Gastrocnemius medialis (tissue), 4 donors: ENCODE measurements at regions of chr2 and their contacts with region 1.

Region 1: GRCh38 chr2:26942543-26943295 is 27.7 kb upstream of the MAPRE3 start:
- DNase-seq: peak; percentile 20 to 47
- ATAC-seq: peak; percentile 41 to 68
- H3K4me3 ChIP-seq: no peak overlapping the region
- H3K27ac ChIP-seq: no peak overlapping the region
- H3K4me1 ChIP-seq: peaks cover 6 to 8% of the 10 kb centered on the region in 2 donors
- H3K27me3 ChIP-seq: peaks cover 0 to 4% (median 0%) of the 10 kb centered on the region in 3 donors
- CTCF ChIP-seq: peak; percentile 47 to 86 (median 78)
- POLR2A ChIP-seq: no peak

Region 2: GRCh38 chr2:26840937-26841613 is 101.6 kb before region 1 on chr2:
- in situ Hi-C with region 1: loop called in 3 of 4 experiments (anchors 5 to 25 kb)
- intact Hi-C with region 1: loop called (anchors 1 kb)
- DNase-seq: no peak
- ATAC-seq: no peak
- H3K4me3 ChIP-seq: no peak overlapping the region
- H3K27ac ChIP-seq: no peak overlapping the region
- H3K4me1 ChIP-seq: no peaks in the 10 kb centered on the region
- H3K27me3 ChIP-seq: peaks cover 13 to 39% (median 29%) of the 10 kb centered on the region in 3 donors
- CTCF ChIP-seq: no peak
- POLR2A ChIP-seq: no peak

Region 3: DNA sequence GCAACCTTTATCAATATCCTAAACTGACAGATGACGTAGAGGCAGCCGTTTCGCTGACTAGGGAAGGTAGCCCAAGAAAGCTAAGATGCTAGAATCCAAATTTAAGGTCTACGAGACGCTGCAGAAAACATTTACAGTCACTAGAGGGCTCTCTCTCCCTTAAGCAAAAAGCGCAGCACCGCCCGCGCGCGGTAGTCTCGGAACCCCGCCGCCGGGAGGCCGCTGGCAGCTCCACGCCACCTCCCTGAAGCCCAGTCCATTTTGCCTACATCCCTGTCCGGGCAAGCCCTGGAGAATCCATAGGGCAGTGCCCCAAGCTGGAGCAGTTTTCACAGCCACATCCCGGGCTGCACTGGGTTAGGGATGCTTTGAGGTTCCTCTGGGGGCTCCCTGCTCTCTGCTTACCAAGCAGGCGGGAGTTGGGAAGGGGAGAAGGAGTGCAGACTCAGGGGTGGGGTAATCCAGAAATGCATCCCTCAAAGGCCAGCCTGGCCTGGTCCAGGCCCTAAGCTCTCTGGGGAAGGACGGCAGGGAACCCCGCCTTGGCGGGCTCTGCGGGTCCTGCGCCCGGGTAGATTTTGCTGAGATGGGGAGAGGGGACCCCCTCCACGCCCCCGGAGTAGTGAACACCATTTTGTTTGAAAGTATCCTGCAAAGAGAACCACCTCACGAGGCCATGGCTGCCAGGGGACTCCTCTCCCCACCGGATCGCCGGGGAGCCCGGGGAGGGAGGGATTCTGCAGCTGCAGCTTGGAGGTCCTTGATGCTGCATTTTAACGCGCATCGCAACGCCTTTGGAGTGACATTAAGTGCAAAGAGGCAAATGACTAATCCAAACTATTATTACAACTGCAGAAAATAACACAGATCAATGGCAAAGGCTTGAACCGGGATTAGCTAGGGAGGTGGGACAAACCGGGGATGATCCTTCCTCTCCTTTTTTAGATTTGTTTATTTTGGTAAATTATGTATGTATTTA is 96.1 kb before region 1 on chr2:
- in situ Hi-C with region 1: loop called in 3 of 4 experiments (anchors 5 to 25 kb)
- intact Hi-C with region 1: loop called (anchors 1 kb)
- DNase-seq: peak; percentile 25 to 37
- ATAC-seq: peak; percentile 64 to 82
- H3K4me3 ChIP-seq: no peak overlapping the region
- H3K27ac ChIP-seq: no peak overlapping the region
- H3K4me1 ChIP-seq: peaks cover 7 to 27% of the 10 kb centered on the region in 2 donors
- H3K27me3 ChIP-seq: peaks cover 43 to 70% (median 60%) of the 10 kb centered on the region in 3 donors
- CTCF ChIP-seq: peak; percentile 58 to 81 (median 73)
- POLR2A ChIP-seq: no peak